ENCODE measurements at regions of chr13 and their contacts with region 1.

Region 1: DNA sequence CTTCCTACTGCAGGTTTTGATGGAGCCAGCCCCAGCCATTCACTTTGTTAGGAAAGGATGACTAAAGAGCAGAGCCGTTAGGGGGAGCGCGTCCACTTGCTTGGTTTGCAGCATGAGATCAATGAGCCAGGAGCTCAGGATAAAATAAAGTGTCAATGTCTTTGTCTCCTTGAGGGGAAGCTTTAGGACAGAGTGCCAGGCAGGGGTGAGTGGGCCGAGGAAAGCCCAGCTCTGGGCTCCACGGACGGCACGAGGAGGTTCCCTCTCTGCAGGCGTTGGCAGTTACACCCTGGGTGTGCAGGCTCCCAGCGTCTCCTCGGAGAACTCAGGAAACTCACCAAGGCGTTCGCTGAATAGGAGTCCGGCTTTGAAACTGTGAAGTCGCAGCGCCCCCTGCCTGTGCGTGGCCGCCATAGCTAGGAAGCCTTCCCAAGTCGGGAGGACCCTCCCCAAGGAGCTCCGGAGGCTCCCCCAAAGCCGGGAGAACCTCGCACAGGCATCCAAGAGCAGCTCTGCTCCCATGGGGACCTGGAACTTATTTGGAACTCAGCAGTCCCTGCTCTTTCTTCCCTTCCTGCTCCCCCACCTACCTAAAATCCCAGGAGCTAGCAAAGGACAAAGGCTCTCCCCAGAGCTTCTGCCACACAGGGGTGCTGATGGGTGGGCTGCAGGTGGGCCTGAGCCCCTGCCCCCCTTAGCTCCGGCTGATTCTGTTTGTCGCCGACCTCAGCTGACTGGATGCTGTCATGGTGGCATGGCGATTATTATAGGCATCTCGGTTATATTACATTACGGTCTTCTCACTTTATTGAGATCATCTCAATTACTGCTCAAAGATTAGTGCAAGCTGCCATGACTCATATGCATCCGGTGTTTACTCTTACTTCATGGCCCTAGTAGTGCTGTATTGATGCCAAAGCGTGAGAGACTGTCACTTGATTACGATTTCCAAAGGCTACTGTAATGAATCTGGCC is 34.4 kb downstream of the GSX1 start:
- DNase-seq: peak; percentile 84
- ATAC-seq: peak; percentile 93

Region 2: DNA sequence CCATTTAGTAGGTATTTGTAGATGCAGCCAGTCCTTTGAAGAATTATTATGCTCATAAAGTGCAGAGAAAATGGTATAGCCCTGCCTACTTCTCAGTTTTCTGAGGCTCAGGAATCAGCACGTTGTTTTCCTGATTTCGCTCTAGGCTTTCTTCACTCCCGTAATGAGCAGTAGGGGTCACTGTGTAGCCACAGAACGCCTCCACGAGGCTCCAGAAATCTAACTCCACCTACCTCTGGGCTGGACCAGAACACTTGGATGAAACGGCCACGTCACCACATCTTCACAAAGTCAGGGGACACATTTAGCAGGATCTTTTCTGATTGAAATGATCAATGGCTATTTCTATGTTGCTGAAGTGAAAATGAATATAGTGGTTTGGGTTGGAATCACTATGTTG is 452.0 kb before region 1 on chr13:
- intact Hi-C with region 1: loop called (anchors 5 kb)
- DNase-seq: peak; percentile 45
- ATAC-seq: peak; percentile 97

Region 3: DNA sequence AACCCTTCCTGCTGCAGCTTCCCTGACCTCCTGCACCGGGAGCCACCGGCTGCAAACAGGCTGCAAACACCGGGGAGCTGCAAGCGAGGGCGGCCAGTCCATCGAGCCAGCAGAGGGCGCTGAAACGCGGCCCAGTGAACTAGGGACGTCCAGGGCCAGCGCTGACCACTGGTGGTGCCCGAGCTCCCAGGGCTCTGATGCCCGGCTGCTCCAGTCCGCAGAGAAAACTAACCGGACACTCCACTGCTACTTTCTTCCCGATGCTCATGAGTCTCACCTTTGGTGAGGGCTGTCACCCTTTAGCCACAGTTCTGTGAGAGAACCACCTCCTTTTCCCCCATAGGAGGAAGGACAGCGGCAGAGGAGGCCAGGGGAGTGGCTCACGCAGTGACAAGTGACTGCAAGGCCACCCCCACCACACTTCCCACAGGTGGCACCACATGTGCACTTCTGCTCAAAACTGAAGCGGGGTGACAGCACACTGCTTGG is 293.5 kb before region 1 on chr13:
- intact Hi-C with region 1: loop called (anchors 10 kb)
- DNase-seq: peak; percentile 92
- ATAC-seq: peak; percentile 99

Region 4: DNA sequence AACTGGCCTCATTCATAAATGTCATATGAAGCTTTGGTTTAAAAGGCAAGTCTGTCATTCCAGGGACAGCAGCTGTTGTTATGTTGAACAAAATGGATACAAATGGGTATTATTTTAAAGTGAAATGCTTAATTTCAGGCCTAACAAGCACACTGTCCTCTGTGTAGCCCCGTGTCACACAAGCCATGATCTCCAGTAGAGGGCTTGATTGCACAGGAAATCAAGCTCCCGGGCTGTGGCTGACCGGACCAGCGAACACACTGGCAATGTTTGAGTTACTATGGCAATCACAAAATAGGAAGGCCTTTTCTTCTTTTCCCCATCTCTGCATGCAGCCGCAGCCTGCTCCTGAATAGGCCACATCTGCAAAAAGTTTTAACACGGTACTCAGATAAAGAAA is 98.4 kb before region 1 on chr13:
- intact Hi-C with region 1: no loop called
- DNase-seq: no peak
- ATAC-seq: no peak

Region 5: GRCh38 chr13:28967029-28967915 is 1140.6 kb after region 1 on chr13:
- intact Hi-C with region 1: no loop called
- DNase-seq: no peak
- ATAC-seq: no peak